ENCODE measurements at regions of chr12 and their contacts with region 1.

Region 1: GRCh38 chr12:112018571-112019237 is 5.5 kb downstream of the ERP29 start:
- DNase-seq: no peak
- ATAC-seq: no peak
- H3K4me3 ChIP-seq: no peak overlapping the region
- H3K4me3 Mint-ChIP-seq: no peak overlapping the region
- H3K27ac ChIP-seq: peak overlapping the region; percentile 10
- H3K27ac Mint-ChIP-seq: peak overlapping the region; percentile 42 to 60
- H3K4me1 ChIP-seq: peaks cover 9 to 48% of the 10 kb centered on the region in 2 experiments
- H3K4me1 Mint-ChIP-seq: peaks cover 58 to 70% (median 59%) of the 10 kb centered on the region in 3 donors
- H3K27me3 ChIP-seq: no peaks in the 10 kb centered on the region
- H3K27me3 Mint-ChIP-seq: no peaks in the 10 kb centered on the region

Region 2: GRCh38 chr12:111953455-111953854 is 65.2 kb before region 1 on chr12:
- CTCF ChIA-PET with region 1: interaction called in 1 of 2 experiments, 4 read pairs
- POLR2A ChIA-PET with region 1: interaction called in 1 of 2 experiments, 10 read pairs
- DNase-seq: no peak
- ATAC-seq: no peak
- H3K4me3 ChIP-seq: no peak overlapping the region
- H3K4me3 Mint-ChIP-seq: no peak overlapping the region
- H3K27ac ChIP-seq: no peak overlapping the region
- H3K27ac Mint-ChIP-seq: peak overlapping the region in 1 of 2 donors; percentile 60
- H3K4me1 ChIP-seq: peaks cover 0 to 7% of the 10 kb centered on the region in 2 experiments
- H3K4me1 Mint-ChIP-seq: peaks cover 32 to 41% (median 37%) of the 10 kb centered on the region in 3 donors
- H3K27me3 ChIP-seq: no peaks in the 10 kb centered on the region
- H3K27me3 Mint-ChIP-seq: no peaks in the 10 kb centered on the region

Region 3: GRCh38 chr12:112087055-112087850 is 68.5 kb after region 1 on chr12:
- CTCF ChIA-PET with region 1: interaction called in 1 of 2 experiments, 12 read pairs
- POLR2A ChIA-PET with region 1: no interaction called
- DNase-seq: no peak
- ATAC-seq: no peak
- H3K4me3 ChIP-seq: no peak overlapping the region
- H3K4me3 Mint-ChIP-seq: no peak overlapping the region
- H3K27ac ChIP-seq: no peak overlapping the region
- H3K27ac Mint-ChIP-seq: peak overlapping the region in 1 of 2 donors; percentile 11
- H3K4me1 ChIP-seq: no peaks in the 10 kb centered on the region
- H3K4me1 Mint-ChIP-seq: peaks cover 12 to 17% (median 15%) of the 10 kb centered on the region in 3 donors
- H3K27me3 ChIP-seq: no peaks in the 10 kb centered on the region
- H3K27me3 Mint-ChIP-seq: no peaks in the 10 kb centered on the region

Region 4: DNA sequence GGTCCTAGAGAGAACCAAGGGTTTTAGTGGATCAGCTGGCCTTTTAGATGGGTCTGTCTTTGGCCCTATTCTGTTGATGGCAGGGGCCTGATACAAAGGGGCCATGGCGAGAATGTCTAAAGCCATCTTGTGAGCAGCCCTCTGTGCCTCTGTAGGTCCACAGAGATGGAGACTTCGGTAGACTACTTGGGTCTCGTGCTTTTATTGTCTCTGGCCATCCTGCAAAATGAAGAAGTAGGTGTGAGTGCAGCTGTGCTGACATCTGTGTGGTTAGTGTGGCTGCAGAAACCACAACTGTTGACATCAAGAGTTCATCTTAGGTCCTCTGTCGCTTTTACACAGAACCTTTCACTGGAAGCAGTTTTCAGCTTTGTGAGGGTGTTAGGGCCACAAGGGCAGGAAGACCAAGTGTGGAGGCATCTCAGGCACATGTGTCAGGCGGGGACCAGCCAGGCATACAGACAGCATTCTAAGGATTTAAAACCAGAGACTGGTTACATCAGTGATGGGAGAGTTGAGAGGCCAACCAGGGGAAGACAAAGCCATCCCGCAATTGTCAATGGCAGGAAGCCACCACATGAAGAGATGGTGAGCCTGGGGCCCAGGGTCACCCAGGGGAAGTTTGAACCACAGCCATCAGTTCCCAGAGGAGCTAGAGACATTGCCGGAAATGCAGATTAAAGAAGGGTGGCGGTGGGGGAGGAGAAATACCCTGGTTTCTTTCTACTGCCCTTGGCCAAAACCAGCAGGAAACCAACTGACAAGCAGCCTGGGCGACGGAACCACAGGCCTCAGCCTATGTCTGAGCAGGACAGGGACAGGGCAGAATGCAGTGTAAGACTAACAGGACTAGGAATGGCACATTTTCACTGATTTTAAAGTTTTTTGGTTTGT is 1189.6 kb after region 1 on chr12:
- CTCF ChIA-PET with region 1: no interaction called
- POLR2A ChIA-PET with region 1: no interaction called
- DNase-seq: peak; percentile 5 to 88 (median 50)
- ATAC-seq: peak; percentile 74 to 82 (median 80)
- H3K4me3 ChIP-seq: no peak overlapping the region
- H3K4me3 Mint-ChIP-seq: peak overlapping the region; percentile 54 to 77 (median 59)
- H3K27ac ChIP-seq: peak overlapping the region; percentile 81
- H3K27ac Mint-ChIP-seq: peak overlapping the region; percentile 94 to 97
- H3K4me1 ChIP-seq: peaks cover 25 to 48% of the 10 kb centered on the region in 2 experiments
- H3K4me1 Mint-ChIP-seq: peaks cover 40 to 53% (median 46%) of the 10 kb centered on the region in 3 donors
- H3K27me3 ChIP-seq: no peaks in the 10 kb centered on the region
- H3K27me3 Mint-ChIP-seq: no peaks in the 10 kb centered on the region

Measured in T-cell (primary cell).